ENCODE measurements at regions of chr6 and their contacts with region 1.

Region 1: GRCh38 chr6:44338228-44339122 is 4.0 kb upstream of the SPATS1 start:
- DNase-seq: peak; percentile 83
- ATAC-seq: peak; percentile 89
- H3K4me3 Mint-ChIP-seq: no peak overlapping the region
- H3K27ac Mint-ChIP-seq: no peak overlapping the region
- H3K4me1 Mint-ChIP-seq: no peaks in the 10 kb centered on the region
- H3K27me3 Mint-ChIP-seq: peaks cover 19% of the 10 kb centered on the region
- CTCF ChIP-seq: peak; percentile 74

Region 2: DNA sequence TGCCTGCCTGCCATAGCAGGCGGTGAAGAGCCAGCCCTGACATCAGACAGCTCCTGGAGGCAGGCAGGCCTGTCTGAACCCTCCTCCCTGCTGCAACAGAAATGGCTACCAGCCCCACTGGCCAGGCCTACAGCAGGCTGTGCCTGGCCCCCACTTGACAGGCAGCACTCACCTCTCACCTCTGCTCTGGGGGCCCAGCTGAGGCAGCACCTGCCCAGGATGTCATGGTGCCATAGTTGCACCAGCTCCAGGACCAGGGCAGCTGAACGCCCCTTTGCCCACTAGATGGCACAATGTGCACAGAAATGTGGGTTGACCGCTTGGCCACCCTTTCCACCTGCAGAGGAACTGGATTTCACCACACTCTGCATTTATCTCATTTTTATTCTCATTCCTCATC is 241.9 kb before region 1 on chr6:
- CTCF ChIA-PET with region 1: interaction called, 4 read pairs
- POLR2A ChIA-PET with region 1: no interaction called
- intact Hi-C with region 1: loop called (anchors 5 kb)
- DNase-seq: peak; percentile 86
- ATAC-seq: peak; percentile 96
- H3K4me3 Mint-ChIP-seq: no peak overlapping the region
- H3K27ac Mint-ChIP-seq: no peak overlapping the region
- H3K4me1 Mint-ChIP-seq: no peaks in the 10 kb centered on the region
- H3K27me3 Mint-ChIP-seq: no peaks in the 10 kb centered on the region
- CTCF ChIP-seq: peak; percentile 71

Region 3: DNA sequence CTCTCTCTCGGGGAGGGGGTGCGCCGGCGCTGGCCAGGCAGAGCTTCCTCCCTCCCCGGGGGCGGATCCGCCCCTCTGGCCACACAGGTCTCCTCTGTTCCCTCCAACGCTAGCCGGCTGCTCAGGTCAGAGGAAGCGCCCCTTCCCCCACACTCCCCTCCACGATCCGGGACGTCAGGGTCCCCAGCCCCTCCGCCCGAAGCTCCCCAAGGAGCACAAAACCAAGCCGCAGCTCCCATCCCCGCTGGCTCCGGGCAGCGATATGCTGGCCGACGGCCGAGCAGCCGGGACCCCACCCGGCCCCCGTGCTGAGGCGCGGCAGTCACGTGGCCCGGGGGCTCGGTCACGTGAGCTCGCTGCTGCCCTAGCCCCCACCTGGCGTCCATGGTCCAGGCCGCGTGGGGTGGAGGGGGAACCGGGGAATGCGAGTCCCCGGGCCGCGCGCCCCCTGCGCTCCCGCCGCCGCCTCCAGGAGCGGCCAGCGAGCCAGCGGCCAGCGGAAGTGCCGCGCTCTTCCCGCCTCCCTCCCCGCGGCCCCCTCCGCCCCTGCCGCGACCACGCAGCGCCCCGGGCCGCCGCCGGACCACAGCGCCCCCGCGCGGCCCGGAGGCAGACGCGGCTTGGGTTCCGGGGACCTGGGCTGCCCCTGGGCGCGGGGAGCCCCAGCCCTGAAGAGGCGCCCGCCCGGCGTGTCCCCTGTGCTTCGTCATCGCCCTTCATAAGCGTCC is 81.3 kb before region 1 on chr6 and contains the start of gene SLC35B2:
- CTCF ChIA-PET with region 1: interaction called, 10 read pairs
- POLR2A ChIA-PET with region 1: no interaction called
- intact Hi-C with region 1: no loop called
- DNase-seq: peak; percentile 72
- ATAC-seq: peak; percentile 68
- H3K4me3 Mint-ChIP-seq: peak within 1 kb of the TSS; percentile 85
- H3K27ac Mint-ChIP-seq: peak within 1 kb of the TSS; percentile 85
- H3K4me1 Mint-ChIP-seq: peaks cover 66% of the 10 kb centered on the region
- H3K27me3 Mint-ChIP-seq: no peaks in the 10 kb centered on the region
- CTCF ChIP-seq: peak; percentile 77
- total RNA-seq, gene SLC35B2: 15.4 to 16.7 TPM

Region 4: GRCh38 chr6:44297063-44298038 is 41.1 kb before region 1 on chr6:
- CTCF ChIA-PET with region 1: interaction called, 10 read pairs
- POLR2A ChIA-PET with region 1: interaction called, 3 read pairs
- intact Hi-C with region 1: no loop called
- DNase-seq: peak; percentile 67
- ATAC-seq: peak; percentile 90
- H3K4me3 Mint-ChIP-seq: peak overlapping the region; percentile 53
- H3K27ac Mint-ChIP-seq: peak overlapping the region; percentile 15
- H3K4me1 Mint-ChIP-seq: peaks cover 11% of the 10 kb centered on the region
- H3K27me3 Mint-ChIP-seq: peaks cover 31% of the 10 kb centered on the region
- CTCF ChIP-seq: no peak

Region 5: DNA sequence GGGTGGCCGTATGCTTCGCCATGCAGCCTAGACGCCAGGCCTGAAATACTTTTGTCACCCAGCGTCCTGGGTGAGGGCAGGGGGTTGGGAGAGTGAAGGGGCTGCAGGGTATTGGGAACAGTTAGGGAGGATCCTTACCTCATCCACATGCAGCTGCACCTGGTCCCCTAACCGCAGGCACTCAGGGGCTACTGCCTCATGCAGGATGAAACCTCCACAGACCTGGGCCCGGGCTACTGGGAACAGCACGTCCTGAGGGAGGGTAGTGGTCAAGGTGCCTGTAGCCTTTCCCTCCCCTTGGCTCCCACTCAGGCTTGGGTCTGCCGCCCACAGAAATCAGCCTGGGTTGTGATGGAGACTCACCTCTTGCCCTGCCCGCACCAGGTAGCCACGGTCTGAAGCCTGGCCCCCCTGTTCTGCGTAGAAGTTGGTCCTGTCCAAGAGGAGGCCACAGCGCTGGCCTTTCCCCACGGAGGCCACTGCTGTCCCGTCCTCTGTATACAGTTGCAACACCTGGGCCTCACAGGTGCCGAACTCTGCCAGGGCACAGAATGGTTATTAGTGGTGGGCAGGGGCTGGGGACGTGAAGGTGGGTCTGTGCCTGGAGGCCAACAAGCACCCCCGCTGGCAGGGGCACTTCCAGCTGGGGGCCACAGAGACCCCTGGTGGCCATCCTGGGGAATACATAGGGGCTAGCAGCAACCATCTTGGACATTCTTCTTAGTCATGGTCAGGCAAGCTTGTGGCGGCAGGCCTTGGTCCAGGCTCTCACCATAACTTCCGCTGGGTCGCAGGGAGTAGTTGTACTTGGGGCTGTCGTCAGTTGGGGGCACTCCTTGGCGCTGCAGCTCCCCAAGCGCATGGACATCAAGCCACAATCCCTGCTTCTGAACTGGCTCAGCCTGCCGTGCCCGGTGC is 33.9 kb before region 1 on chr6:
- CTCF ChIA-PET with region 1: interaction called, 12 read pairs
- POLR2A ChIA-PET with region 1: no interaction called
- intact Hi-C with region 1: no loop called
- DNase-seq: peak; percentile 54
- ATAC-seq: peak; percentile 93
- H3K4me3 Mint-ChIP-seq: no peak overlapping the region
- H3K27ac Mint-ChIP-seq: no peak overlapping the region
- H3K4me1 Mint-ChIP-seq: no peaks in the 10 kb centered on the region
- H3K27me3 Mint-ChIP-seq: no peaks in the 10 kb centered on the region
- CTCF ChIP-seq: peak; percentile 79

Region 6: DNA sequence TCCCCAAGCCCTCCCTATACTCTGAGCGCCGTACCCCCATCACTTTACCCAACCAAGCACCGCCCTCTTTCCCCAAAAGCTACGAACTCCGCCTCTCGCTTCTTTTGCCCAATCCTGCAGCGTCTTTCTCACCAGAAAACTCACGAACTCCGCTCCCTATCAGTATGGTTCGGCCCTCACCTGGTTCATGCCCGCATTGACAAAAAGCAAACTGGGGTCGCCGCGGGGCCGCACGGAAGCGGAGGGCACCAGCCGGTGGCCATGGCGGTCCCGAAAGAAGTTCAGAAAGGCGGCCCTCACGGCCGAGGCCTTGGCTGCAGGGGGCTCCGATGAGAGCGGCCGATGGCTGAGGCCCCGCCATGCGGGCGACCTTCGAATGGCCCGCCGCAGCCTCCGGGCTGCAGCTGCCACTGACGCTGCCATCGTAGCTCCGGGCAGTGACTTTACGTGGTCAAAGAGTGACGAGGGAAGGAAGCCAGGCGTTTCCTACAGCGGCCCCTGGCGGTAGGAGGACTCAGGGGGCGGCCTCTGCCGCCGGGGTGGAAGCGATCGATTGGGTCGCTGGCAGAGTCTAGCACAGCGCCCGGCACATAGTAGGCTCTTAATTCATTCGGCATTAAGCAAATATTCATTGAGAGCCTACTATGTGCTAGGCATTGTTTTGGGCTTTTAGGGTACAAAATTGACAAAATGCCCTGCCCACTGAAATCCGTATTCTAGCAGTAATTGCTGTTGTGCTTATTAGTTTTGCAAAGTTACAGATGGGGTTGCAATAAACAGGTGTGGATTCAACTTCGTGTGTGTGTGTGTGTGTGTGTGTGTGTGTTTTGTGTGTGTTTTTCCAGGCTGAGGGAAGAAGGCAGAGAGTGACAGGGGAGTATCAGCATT is 25.3 kb before region 1 on chr6 and contains the start of gene AARS2:
- CTCF ChIA-PET with region 1: interaction called, 13 read pairs
- POLR2A ChIA-PET with region 1: no interaction called
- intact Hi-C with region 1: no loop called
- DNase-seq: peak; percentile 95
- ATAC-seq: peak; percentile 97
- H3K4me3 Mint-ChIP-seq: peak within 1 kb of the TSS; percentile 90
- H3K27ac Mint-ChIP-seq: peak within 1 kb of the TSS; percentile 83
- H3K4me1 Mint-ChIP-seq: peaks cover 16% of the 10 kb centered on the region
- H3K27me3 Mint-ChIP-seq: no peaks in the 10 kb centered on the region
- CTCF ChIP-seq: peak; percentile 91
- total RNA-seq, gene AARS2: 16.2 to 16.3 TPM

Region 7: DNA sequence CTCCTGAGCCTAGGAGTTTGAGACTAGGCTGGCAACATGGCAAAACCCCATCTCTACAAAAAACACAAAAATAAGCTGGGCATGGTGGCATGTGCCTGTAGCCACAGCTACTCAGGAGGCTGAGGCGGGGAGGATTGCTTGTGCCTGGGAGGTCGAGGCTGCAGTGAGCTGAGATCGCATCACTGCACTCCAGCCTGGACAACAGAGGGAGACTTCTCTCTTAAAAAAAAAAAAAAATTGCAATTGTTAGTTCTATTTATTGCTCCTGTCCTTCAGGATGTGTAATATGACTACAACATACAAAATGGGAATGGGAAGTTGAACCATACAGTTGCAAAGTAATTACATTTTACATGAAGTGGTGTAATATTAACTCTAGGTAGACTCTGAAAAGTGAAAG is 17.3 kb before region 1 on chr6:
- CTCF ChIA-PET with region 1: interaction called, 10 read pairs
- POLR2A ChIA-PET with region 1: interaction called, 3 read pairs
- intact Hi-C with region 1: no loop called
- DNase-seq: no peak
- ATAC-seq: no peak
- H3K4me3 Mint-ChIP-seq: no peak overlapping the region
- H3K27ac Mint-ChIP-seq: no peak overlapping the region
- H3K4me1 Mint-ChIP-seq: no peaks in the 10 kb centered on the region
- H3K27me3 Mint-ChIP-seq: peaks cover 18% of the 10 kb centered on the region
- CTCF ChIP-seq: no peak

Measured in activated CD8-positive, alpha-beta T cell treated with anti-CD3 and anti-CD28 coated beads for 36 hours (primary cell).